Activated CD4-positive, alpha-beta T cell treated with anti-CD3 and anti-CD28 coated beads, Interleukin-2, amount 10 ng/mL, durations not matched to agents 24 days and 14 days (primary cell): ENCODE measurements at regions of chr2 and their contacts with region 1.

Region 1: DNA sequence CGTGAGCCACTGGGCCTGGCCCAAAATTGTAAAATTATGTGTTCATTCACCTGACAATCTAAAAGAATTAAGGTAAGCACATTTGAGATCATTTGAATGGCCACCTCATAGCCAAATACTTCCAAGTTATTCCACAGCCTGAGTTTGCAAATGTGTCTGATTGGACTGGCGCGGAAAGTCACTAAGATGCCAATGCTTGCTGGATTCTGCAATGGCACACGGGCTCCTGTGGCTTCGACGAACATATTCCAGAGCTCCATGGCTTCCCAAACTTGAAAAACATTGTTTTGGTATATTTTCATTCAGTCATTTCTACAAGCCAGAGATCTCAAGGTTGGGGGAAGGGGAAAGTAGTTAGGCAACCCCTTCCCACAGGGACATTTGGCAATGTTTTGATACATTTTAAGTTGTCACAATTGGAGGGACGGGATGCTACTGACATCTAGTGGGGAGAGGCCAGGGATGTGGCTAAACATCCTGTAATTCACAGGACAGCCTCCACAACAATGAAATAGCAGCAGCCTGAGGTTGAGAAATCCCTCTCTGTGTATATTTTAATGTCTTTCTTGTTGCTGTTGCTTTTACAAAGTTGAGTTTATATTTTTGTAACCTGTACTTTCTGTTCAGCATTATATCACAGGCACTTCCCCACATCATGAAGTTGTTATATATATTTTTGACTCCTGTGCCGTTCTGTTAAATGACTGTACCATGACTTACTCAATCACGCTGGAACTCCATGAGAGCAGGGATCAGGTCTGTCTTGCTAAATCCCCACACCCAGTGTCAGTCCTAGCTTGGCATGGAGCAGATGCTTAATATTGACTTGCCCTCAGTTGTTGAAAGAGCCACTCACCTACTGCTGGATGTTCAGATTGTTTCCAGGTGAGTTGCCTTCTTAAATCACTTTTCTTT is 56.9 kb downstream of the COL4A4 start:
- DNase-seq: peak; percentile 77
- H3K4me3 Mint-ChIP-seq: no peak overlapping the region
- H3K27ac Mint-ChIP-seq: no peak overlapping the region
- H3K4me1 Mint-ChIP-seq: no peaks in the 10 kb centered on the region
- H3K27me3 Mint-ChIP-seq: peaks cover 3% of the 10 kb centered on the region

Region 2: GRCh38 chr2:225668606-225669266 is 1438.4 kb before region 1 on chr2:
- intact Hi-C with region 1: loop called (anchors 5 kb)
- DNase-seq: peak; percentile 76
- H3K4me3 Mint-ChIP-seq: no peak overlapping the region
- H3K27ac Mint-ChIP-seq: no peak overlapping the region
- H3K4me1 Mint-ChIP-seq: no peaks in the 10 kb centered on the region
- H3K27me3 Mint-ChIP-seq: peaks cover 7% of the 10 kb centered on the region

Region 3: GRCh38 chr2:225889446-225889850 is 1217.7 kb before region 1 on chr2:
- intact Hi-C with region 1: loop called (anchors 10 kb)
- DNase-seq: no peak
- H3K4me3 Mint-ChIP-seq: no peak overlapping the region
- H3K27ac Mint-ChIP-seq: no peak overlapping the region
- H3K4me1 Mint-ChIP-seq: no peaks in the 10 kb centered on the region
- H3K27me3 Mint-ChIP-seq: peaks cover 4% of the 10 kb centered on the region

Region 4: DNA sequence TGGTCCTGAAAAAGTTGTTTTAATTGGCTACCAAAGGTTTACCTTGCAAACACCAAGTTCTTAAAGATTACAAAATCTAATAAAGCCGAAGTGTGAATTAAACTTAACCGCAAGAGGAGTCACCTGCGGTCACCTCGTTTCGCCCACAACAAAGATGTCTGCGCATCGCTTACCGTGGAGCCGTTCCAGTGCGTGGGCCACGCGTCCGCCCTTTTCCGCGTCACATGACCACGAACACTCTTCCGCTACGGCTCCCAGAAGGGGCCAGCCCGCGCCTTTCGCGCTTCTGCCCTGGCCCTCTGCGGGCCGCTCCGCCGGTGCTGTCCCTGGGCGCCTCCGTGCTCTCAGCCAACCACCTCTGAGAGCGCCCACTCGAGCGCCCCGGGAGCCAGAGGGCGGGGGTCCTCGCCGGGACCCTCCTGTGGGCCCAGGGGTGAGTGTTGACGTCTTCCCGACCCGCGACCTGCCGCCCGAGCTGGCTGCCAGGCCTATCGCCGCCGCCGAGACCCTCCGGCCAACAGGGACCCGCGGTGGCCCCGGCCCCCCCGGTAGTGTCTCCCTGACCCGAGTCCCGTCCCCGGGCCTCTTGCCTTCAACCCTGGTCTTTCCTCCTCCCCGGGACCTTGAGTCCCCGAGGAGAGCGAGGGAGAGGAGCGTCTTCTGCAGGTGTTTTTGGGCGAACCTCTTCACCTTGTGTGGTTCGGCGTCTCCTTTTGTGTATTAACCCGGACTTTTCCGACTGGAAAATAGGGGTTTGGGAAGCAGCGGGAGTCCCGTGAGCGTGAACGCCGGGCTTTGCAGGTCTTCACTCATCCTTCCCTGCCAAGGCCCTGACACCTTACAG is 218.1 kb after region 1 on chr2 and contains the start of gene MFF:
- intact Hi-C with region 1: no loop called
- DNase-seq: peak; percentile 97
- H3K4me3 Mint-ChIP-seq: peak within 1 kb of the TSS; percentile 94
- H3K27ac Mint-ChIP-seq: peak within 1 kb of the TSS; percentile 95
- H3K4me1 Mint-ChIP-seq: peaks cover 32% of the 10 kb centered on the region
- H3K27me3 Mint-ChIP-seq: peaks cover 6% of the 10 kb centered on the region
- total RNA-seq, gene MFF: 69.5 and 71.6 TPM in 2 replicates